ENCODE measurements at regions of chr3 and their contacts with region 1.

Region 1: DNA sequence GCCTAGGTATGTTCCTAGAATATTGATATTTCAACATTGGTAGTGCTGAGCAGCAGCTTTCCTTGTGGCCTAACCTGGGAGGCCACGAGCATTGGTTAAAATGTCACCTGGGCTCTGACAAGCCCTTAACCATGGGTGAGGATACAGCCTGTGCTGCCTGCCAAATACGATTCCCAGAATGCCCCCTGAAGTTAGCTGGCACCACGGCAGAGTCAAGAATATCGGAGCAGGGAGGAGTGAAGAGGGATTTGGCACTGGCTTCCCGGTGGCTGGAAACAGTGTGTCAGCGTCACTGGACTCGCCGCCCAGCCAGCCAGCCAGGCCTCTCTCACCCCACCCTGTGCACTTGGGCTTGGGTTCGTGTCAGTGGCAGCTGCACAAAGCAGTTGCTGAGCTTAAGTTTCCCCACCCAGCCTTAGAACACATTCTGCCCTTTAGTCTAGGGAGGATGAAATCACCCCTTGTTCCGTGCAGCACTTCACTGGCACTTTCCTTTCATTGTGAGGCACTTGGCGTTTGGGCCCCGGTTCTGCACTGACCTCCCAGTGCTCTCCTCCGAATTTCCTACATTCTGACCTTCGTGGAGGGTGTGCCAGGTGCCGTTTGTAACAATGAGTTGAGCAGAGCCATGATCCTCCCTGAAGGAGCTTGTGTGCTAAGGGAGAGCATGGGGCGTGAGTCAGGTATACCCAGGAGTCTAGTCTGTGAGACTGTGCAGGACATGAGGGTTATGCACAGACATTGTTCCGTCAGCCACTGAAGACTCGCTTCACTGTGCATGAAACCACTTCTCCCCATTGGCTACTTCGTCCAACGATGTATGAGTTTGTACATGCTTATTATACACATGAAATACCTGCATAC is 152.8 kb upstream of the BHLHE40 start:
- DNase-seq: no peak
- H3K4me3 ChIP-seq: no peak overlapping the region
- H3K27ac ChIP-seq: peak overlapping the region; percentile 86
- H3K4me1 ChIP-seq: peaks cover 79% of the 10 kb centered on the region
- H3K27me3 ChIP-seq: no peaks in the 10 kb centered on the region
- CTCF ChIP-seq: no peak

Region 2: DNA sequence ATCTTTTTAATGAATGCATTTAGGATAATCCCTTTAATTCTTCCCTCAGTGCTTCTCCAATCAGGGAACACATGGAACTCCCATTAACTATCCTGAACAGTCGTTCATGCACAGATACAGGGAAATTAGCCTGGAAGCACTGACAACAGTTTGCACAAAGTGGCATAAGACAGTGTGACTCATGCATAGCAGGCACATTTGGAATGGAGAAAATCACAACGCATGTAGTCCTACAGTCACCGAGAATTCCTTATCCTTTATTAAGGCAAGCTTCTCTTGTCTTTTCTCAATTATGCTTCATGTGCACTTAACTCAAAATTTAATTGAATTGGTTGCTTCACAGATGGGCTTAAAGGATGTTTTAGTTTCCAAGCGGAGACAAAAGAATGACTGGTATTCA is 1492.0 kb before region 1 on chr3:
- CTCF ChIA-PET with region 1: no interaction called
- POLR2A ChIA-PET with region 1: no interaction called
- intact Hi-C with region 1: no loop called
- DNase-seq: no peak
- H3K4me3 ChIP-seq: no peak overlapping the region
- H3K27ac ChIP-seq: no peak overlapping the region
- H3K4me1 ChIP-seq: no peaks in the 10 kb centered on the region
- H3K27me3 ChIP-seq: no peaks in the 10 kb centered on the region
- CTCF ChIP-seq: no peak

Region 3: DNA sequence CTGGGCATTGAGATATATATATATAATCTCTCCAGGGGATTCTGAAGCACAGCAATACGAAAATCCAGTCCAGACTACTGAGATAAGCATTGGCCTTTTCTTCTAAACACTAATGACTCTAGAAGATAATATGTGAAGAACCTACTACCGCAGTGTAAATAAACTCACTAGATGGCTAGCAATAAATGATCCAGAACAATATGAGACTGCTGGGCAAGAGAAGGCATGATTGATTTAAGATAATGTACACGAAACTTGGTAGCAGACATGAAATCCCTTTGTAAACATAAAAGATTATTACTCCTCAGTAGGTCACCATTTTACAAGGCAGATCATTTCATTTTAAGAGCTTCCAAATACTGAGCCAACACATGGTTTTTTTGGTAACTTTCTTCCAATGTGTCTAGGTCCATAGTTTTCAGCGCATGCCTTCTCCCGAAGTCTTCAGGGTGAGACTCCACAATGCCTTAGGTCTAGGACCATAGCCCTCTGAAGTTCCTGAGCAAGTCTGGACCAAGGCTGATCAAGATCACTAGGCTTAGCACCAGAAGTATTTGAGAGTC is 834.1 kb before region 1 on chr3:
- CTCF ChIA-PET with region 1: no interaction called
- POLR2A ChIA-PET with region 1: no interaction called
- intact Hi-C with region 1: no loop called
- DNase-seq: no peak
- H3K4me3 ChIP-seq: no peak overlapping the region
- H3K27ac ChIP-seq: no peak overlapping the region
- H3K4me1 ChIP-seq: no peaks in the 10 kb centered on the region
- H3K27me3 ChIP-seq: no peaks in the 10 kb centered on the region
- CTCF ChIP-seq: no peak

Region 4: DNA sequence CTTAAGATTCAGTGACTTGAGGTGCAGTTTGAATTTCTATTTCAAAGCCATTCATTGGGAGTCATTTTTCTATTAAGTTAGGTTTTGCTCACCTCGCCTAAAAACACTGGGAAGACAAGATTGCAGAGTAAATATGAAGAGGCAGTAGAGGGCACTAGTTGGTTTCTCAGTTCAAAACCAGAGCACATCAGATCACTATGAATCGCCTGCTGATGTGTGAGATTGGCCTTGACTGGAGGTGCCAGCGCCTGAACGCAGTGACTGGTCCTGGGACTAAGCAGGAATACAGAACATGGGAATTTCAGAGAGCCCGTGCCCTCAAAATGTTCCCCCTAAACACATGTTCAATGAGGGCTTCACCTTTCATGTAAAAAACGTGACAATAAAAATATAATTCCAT is 104.4 kb before region 1 on chr3:
- CTCF ChIA-PET with region 1: interaction called, 5 read pairs
- POLR2A ChIA-PET with region 1: no interaction called
- intact Hi-C with region 1: loop called (anchors 1 kb)
- DNase-seq: peak in 1 of 2 experiments; percentile 25
- H3K4me3 ChIP-seq: no peak overlapping the region
- H3K27ac ChIP-seq: no peak overlapping the region; the same call in 1 of the 2 replicates
- H3K4me1 ChIP-seq: no peaks in the 10 kb centered on the region
- H3K27me3 ChIP-seq: no peaks in the 10 kb centered on the region
- CTCF ChIP-seq: peak; percentile 39; the same call in 1 of the 2 replicates

Region 5: DNA sequence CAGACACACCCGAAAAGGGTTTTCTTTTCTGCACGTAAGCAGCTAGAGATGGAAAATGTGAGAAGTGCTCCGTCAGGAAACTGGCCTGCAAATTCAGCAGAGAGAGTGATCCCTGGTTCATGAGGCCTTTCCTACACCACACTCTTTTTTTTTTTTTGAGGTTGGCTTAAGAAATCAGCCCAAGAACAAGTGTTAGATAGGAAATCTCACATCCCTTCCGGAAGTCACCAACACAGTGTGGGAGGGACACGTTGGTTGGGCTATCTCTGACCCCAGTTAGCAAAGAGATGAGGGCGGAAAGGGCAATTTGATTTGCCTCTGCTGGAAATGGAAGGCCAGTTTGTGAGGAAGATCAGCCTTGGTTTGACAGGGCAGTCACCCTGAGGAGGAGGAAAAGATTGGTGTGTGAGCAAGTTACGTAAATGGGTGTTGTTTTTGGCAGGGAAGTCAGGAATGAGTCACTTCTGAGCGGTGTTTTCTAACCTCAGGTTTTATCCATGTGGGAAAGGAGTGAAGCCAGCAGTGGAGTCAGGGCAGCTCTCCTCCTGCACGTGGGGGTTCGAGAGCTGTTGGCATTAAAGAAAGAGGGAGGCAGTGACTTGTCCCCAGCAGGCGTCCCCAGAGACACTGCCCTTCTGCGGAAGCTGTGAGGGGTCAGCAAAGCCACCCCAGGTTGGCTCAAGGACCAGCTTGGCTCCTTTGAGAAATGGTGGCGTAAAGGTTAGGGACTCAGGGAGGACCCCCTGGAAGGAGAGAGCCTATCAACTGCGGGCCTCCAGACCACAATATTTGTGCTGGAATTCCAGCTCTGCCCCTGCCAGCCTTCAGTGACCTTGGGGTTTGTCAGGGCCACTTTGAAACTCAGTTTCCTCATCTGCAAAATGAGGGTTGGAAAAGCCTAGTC is 84.8 kb before region 1 on chr3:
- CTCF ChIA-PET with region 1: interaction called, 3 read pairs
- POLR2A ChIA-PET with region 1: interaction called, 3 read pairs
- intact Hi-C with region 1: loop called (anchors 1 kb)
- DNase-seq: peak; percentile 67 to 85
- H3K4me3 ChIP-seq: no peak overlapping the region
- H3K27ac ChIP-seq: peak overlapping the region; percentile 81
- H3K4me1 ChIP-seq: peaks cover 48% of the 10 kb centered on the region
- H3K27me3 ChIP-seq: no peaks in the 10 kb centered on the region
- CTCF ChIP-seq: no peak

Region 6: GRCh38 chr3:4898454-4899313 is 72.2 kb after region 1 on chr3:
- CTCF ChIA-PET with region 1: no interaction called
- POLR2A ChIA-PET with region 1: no interaction called
- intact Hi-C with region 1: loop called (anchors 1 kb)
- DNase-seq: peak; percentile 21 to 76
- H3K4me3 ChIP-seq: no peak overlapping the region
- H3K27ac ChIP-seq: peak overlapping the region; percentile 32; the same call in 1 of the 2 replicates
- H3K4me1 ChIP-seq: peaks cover 22% of the 10 kb centered on the region
- H3K27me3 ChIP-seq: no peaks in the 10 kb centered on the region
- CTCF ChIP-seq: no peak

Region 7: DNA sequence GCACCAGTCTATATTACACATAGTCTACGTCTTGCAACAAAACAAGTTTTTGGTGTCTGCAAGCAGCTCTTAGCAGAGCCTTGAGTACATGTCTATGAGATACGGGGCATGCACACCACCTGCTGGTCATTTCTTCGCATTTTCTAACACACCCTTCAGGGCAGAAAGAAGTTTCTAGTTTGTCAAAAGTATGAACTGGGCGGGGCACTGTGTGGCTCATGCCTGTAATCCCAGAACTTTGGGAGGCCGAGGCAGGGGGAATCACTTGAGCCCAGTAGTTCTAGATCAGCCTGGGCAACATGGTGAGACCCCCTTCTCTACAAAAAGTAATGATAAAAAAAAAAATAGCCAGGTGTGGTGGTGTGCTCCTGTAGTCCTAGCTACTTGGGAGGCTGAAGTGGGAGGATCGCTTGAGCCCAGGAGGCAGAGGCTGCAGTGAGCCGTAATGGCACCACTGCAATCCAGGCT is 231.4 kb after region 1 on chr3:
- CTCF ChIA-PET with region 1: no interaction called
- POLR2A ChIA-PET with region 1: interaction called, 3 read pairs
- intact Hi-C with region 1: loop called (anchors 10 kb)
- DNase-seq: peak; percentile 71 to 74
- H3K4me3 ChIP-seq: no peak overlapping the region
- H3K27ac ChIP-seq: no peak overlapping the region
- H3K4me1 ChIP-seq: peaks cover 6% of the 10 kb centered on the region
- H3K27me3 ChIP-seq: no peaks in the 10 kb centered on the region
- CTCF ChIP-seq: peak; percentile 73

Region 8: DNA sequence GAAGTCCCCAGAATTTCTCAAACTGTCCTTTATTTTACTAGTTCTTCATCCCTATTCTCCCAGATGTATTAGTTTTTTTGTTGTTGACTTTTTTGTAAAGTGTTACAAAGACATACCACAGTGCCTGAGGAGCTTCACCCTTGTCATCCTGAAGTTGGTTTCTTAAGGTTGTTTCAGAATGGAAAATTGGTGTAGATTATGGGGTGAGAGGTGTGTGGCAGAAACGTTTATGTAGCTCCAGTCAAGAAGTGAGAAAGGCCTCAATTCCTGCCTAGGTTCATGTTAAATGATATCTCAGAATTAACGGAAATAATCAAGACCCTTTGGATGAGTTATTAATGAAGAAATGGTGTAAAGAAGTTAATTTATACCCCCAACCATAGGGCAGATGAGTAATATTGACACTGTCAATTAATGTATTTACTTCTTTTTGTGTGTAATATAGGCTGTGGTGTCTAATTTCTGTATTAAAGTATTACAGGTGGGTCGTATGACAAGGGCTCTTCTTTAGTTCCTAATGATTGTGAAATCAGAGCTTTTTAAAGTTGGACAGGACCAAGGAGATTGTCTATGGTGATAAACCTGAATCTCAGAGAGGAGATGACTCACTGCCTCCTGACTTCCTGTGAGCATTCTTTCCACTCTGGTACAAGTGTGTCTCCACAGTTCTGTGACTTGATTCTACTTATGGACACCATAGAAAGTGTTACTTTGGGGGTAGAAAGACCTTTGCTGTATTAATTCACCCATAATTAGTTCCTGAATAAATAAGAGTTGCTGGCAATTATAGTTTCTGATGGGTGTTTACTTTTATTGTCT is 368.1 kb after region 1 on chr3:
- CTCF ChIA-PET with region 1: no interaction called
- POLR2A ChIA-PET with region 1: no interaction called
- intact Hi-C with region 1: loop called (anchors 5 kb)
- DNase-seq: peak; percentile 31 to 91
- H3K4me3 ChIP-seq: peak overlapping the region; percentile 19; the same call in 1 of the 2 replicates
- H3K27ac ChIP-seq: peak overlapping the region; percentile 100
- H3K4me1 ChIP-seq: peaks cover 88% of the 10 kb centered on the region
- H3K27me3 ChIP-seq: no peaks in the 10 kb centered on the region
- CTCF ChIP-seq: no peak

Measured in PC-9 (cell line).